ENCODE measurements at regions of chr20 and their contacts with region 1.

Region 1: GRCh38 chr20:645318-646106 is 7.5 kb downstream of the SRXN1 start:
- DNase-seq: peak; percentile 75
- ATAC-seq: peak; percentile 91
- H3K4me3 Mint-ChIP-seq: no peak overlapping the region
- H3K27ac Mint-ChIP-seq: no peak overlapping the region
- H3K4me1 Mint-ChIP-seq: peaks cover 12% of the 10 kb centered on the region
- H3K27me3 Mint-ChIP-seq: peaks cover 16% of the 10 kb centered on the region
- CTCF ChIP-seq: peak; percentile 98

Region 2: DNA sequence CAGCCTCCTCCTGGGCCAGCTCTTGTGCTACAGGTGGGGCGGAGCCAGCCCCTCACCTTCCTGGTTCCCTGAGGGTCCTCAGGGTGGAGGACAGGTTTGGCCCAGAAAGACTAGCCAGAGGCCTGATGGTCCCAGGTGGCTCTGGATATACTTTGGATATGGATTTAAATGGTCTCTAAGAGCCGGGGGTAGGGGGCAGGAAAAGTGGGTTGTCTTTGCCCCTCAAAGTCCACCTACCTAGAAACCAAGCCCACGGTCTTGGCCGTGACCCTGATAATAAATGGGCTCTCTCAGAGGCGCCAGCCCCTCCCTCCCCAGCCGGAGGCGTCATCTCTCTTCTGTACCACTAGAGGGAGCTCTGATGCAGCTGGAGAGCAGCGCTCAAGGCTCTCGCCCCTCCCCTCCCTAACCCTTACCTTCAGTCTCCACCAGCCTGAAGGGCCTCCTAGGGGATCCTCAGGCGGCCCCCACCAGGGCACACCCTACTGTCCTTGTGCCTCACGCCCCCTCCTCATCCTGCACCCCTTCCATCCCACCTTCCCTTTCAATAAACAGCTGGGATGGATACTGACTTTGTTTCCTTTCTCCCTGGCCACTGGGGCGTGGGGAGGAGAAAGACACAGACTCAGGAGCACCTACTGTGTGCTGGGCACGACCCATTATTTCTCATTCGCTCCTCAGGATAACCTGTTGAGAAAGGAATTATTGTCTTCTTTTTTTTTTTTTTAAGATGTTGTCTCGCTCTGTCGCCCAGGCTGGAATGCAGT is 291.0 kb before region 1 on chr20:
- CTCF ChIA-PET with region 1: interaction called, 9 read pairs
- POLR2A ChIA-PET with region 1: no interaction called
- intact Hi-C with region 1: loop called (anchors 5 kb)
- DNase-seq: peak; percentile 83
- ATAC-seq: peak; percentile 100
- H3K4me3 Mint-ChIP-seq: no peak overlapping the region
- H3K27ac Mint-ChIP-seq: no peak overlapping the region
- H3K4me1 Mint-ChIP-seq: no peaks in the 10 kb centered on the region
- H3K27me3 Mint-ChIP-seq: peaks cover 2% of the 10 kb centered on the region
- CTCF ChIP-seq: peak; percentile 92

Region 3: GRCh38 chr20:550611-551010 is 94.9 kb before region 1 on chr20:
- CTCF ChIA-PET with region 1: interaction called, 11 read pairs
- POLR2A ChIA-PET with region 1: no interaction called
- intact Hi-C with region 1: no loop called
- DNase-seq: no peak
- ATAC-seq: no peak
- H3K4me3 Mint-ChIP-seq: no peak overlapping the region
- H3K27ac Mint-ChIP-seq: no peak overlapping the region
- H3K4me1 Mint-ChIP-seq: no peaks in the 10 kb centered on the region
- H3K27me3 Mint-ChIP-seq: peaks cover 28% of the 10 kb centered on the region
- CTCF ChIP-seq: no peak

Region 4: DNA sequence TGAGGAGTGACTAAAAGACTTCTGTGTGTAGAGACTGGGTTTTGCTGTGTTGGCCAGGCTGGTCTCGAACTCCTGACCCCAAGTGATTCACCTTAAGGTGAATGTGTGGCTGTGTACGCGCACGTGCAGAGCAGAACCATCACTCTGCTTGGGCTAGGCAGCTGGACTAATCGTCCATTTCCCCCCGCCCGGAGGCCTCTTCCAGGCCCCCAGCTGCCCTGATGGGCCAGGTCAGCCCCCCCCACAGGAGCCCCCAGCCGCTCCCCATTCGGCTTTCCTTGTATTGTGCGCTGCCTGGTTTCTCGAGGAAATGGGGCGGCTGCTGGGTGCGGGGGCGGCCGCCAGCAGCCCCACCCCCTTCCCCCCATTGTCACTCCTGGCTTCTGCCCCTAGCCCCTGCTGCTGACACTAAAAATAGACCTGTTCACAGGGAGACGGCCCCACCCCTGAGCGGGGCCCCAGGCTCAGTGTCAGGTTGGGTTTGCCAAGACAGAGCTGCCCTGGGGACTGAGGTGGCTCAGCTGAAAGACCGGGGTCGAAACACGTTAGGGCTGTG is 77.3 kb before region 1 on chr20:
- CTCF ChIA-PET with region 1: interaction called, 56 read pairs
- POLR2A ChIA-PET with region 1: no interaction called
- intact Hi-C with region 1: loop called (anchors 2 kb)
- DNase-seq: peak; percentile 44
- ATAC-seq: peak; percentile 81
- H3K4me3 Mint-ChIP-seq: no peak overlapping the region
- H3K27ac Mint-ChIP-seq: no peak overlapping the region
- H3K4me1 Mint-ChIP-seq: peaks cover 8% of the 10 kb centered on the region
- H3K27me3 Mint-ChIP-seq: peaks cover 20% of the 10 kb centered on the region
- CTCF ChIP-seq: no peak

Region 5: GRCh38 chr20:667391-667964 is 22.0 kb after region 1 on chr20:
- CTCF ChIA-PET with region 1: interaction called, 11 read pairs
- POLR2A ChIA-PET with region 1: no interaction called
- intact Hi-C with region 1: no loop called
- DNase-seq: peak; percentile 83
- ATAC-seq: peak; percentile 62
- H3K4me3 Mint-ChIP-seq: no peak overlapping the region
- H3K27ac Mint-ChIP-seq: no peak overlapping the region
- H3K4me1 Mint-ChIP-seq: peaks cover 6% of the 10 kb centered on the region
- H3K27me3 Mint-ChIP-seq: peaks cover 53% of the 10 kb centered on the region
- CTCF ChIP-seq: peak; percentile 78